H1 (cell line): ENCODE measurements at regions of chr1 and their contacts with region 1.

Region 1: DNA sequence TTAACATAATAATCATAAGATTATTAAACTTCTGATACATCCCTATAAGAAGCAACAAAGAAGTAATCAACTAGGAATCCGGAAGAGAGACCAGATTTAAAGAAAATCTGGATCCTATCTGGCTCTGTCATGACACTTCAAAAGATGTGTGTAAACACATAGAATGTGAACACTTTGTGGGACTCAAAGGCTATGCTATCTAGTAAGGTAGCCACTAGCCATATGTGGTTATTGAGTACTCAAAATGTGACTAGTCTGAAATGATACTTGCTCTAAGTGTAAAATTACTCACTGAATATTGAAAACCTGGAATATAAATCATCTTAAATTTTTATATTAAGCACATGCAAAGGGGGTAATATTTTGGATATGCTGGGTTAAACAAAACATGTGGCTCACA is 8.7 kb downstream of the FUBP1 start:
- DNase-seq: no peak
- H3K4me3 ChIP-seq: no peak overlapping the region
- H3K27ac ChIP-seq: no peak overlapping the region
- H3K4me1 ChIP-seq: peaks cover 0 to 5% (median 0%) of the 10 kb centered on the region in 4 experiments; a peak in 2 of 7 replicates
- H3K27me3 ChIP-seq: no peaks in the 10 kb centered on the region
- CTCF ChIP-seq: no peak
- EP300 ChIP-seq: no peak
- POLR2A ChIP-seq: no peak
- RAD21 ChIP-seq: no peak

Region 2: DNA sequence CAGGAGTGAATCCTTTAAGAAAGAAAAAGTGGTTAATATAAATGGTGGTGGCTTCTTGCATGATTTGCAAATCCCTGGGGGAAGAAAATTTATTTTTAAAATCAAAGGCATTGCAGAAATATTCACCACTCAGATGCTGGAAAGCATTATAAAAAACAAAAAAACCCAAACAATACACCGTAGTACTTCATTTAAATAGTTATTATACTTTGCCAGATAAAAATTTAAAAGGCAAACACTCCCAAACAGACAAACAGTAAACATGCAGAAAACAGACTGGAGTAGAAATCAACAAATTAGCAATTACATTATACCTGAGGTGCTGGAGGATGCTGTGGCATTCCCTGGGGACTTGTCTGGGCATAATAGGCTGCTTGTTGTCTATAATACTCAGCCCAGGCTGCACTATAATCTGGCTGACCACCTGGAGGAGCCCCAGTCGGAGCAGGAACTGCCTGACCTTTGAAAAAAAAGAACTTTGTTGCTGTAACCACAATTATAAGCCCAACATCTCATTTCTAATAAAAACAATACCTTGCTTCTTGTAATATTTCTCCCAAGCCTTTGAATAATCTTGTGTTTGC is 21.3 kb before region 1 on chr1:
- CTCF ChIA-PET with region 1: interaction called, 6 read pairs
- POLR2A ChIA-PET with region 1: interaction called, 47 read pairs
- DNase-seq: no peak
- H3K4me3 ChIP-seq: no peak overlapping the region
- H3K27ac ChIP-seq: no peak overlapping the region
- H3K4me1 ChIP-seq: no peaks in the 10 kb centered on the region
- H3K27me3 ChIP-seq: no peaks in the 10 kb centered on the region
- CTCF ChIP-seq: peak in 2 of 3 experiments; percentile 6 to 10; a peak in 2 of 4 replicates
- EP300 ChIP-seq: no peak
- POLR2A ChIP-seq: no peak
- RAD21 ChIP-seq: peak in 1 of 2 experiments; percentile 9; a peak in 1 of 4 replicates

Region 3: DNA sequence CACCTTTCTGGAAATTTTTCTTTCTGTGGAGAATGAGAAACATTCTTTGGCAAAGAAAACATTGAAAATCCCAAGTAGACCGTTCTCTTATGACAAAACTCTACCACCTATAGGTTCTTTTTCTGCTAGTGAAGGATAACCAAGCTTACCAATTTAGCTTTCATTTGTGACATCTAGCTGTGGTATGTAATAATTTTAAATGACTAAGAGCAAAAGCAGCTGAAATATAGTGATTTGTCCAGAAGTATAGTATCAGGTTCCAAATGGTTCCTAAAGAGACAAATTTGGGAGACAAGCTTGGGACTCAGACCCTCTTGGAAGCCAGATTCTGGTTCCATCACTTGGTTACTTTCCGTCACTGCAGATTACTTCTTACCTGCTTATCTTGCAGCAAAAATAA is 15.7 kb before region 1 on chr1:
- CTCF ChIA-PET with region 1: interaction called, 6 read pairs
- POLR2A ChIA-PET with region 1: interaction called, 47 read pairs
- DNase-seq: no peak
- H3K4me3 ChIP-seq: no peak overlapping the region
- H3K27ac ChIP-seq: no peak overlapping the region
- H3K4me1 ChIP-seq: no peaks in the 10 kb centered on the region
- H3K27me3 ChIP-seq: no peaks in the 10 kb centered on the region
- CTCF ChIP-seq: no peak
- EP300 ChIP-seq: no peak
- POLR2A ChIP-seq: no peak
- RAD21 ChIP-seq: no peak

Region 4: DNA sequence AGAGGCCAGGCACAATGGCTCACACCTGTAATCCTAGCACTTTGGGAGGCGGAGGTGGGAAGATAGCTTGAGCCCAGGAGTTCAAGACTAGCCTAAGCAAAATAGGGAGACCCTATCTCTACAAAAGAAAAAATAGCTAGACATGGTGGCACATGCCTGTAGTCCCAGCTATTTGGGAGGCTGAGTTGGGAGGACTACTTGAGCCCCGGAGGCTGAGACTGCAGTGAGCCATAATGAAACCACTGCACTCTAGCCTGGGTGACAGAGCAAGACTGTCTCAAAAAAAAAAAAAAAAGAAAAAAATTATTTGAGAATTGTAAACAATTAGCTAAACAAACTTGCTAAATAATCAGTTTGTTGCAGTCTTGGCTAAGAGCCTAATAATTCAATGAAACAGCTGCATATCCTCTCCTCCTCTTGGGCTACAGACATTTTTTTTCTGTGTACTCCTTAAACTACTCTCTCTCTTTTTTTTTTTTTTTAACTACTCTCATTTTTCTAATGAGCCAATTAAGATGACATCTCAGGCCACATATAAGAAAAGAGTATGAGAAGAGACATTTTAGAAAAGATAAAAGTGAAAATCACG is 24.0 kb after region 1 on chr1:
- CTCF ChIA-PET with region 1: no interaction called
- POLR2A ChIA-PET with region 1: interaction called, 46 read pairs
- DNase-seq: no peak
- H3K4me3 ChIP-seq: no peak overlapping the region
- H3K27ac ChIP-seq: no peak overlapping the region
- H3K4me1 ChIP-seq: no peaks in the 10 kb centered on the region
- H3K27me3 ChIP-seq: no peaks in the 10 kb centered on the region
- CTCF ChIP-seq: no peak
- EP300 ChIP-seq: no peak
- POLR2A ChIP-seq: no peak
- RAD21 ChIP-seq: no peak